ENCODE measurements at regions of chr5 and their contacts with region 1.

Region 1: DNA sequence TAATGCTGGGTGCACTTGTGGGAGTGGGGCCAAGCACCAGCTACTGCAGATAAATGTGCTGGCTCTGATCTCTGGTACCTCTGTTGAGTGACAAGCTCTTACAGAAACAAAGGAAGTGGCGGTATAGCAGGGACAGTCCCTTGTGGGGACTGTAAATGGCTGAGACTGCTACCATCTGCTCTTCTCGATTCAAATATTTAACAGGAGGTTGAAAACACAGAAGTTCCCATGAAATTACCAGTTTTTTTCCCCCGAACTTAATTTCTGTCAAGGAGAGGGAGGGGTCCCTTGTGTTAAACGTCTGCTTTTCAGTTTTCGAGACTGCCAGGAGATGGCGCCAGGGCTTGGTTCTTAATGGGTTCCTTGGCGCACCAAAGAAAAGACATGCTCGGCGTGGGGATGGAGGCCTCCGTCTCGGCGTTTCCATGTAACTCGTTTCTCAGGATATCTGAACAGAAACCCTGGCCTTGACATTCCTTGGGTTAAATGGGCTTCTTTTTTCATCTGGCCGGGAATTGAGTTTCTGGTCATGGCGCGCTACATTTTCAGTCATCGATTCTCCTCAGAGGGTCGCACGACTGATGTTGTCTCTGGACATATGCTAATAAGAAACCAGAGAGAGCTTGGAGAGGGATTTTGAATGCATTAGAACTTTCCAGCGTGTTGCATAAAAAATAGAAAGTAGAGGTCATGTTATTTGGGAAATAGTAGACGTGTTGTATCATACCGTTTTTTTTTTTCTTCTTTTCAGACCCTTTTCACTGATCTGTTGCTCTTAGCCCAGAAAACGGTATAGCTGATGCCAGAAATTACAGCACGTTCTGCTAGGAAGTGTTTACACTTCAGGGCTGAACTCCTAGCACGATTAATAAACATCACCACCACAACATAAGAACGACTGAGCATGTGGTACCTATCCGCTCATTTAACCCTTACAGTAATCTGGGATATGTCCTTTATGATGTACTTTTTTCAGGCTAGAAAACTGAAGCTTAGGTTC is 64.0 kb downstream of the CARTPT start:
- DNase-seq: peak; percentile 36
- H3K4me3 ChIP-seq: peak overlapping the region; percentile 39
- H3K27ac ChIP-seq: peak overlapping the region; percentile 41
- H3K27me3 ChIP-seq: peaks cover 3% of the 10 kb centered on the region
- CTCF ChIP-seq: peak; percentile 94

Region 2: DNA sequence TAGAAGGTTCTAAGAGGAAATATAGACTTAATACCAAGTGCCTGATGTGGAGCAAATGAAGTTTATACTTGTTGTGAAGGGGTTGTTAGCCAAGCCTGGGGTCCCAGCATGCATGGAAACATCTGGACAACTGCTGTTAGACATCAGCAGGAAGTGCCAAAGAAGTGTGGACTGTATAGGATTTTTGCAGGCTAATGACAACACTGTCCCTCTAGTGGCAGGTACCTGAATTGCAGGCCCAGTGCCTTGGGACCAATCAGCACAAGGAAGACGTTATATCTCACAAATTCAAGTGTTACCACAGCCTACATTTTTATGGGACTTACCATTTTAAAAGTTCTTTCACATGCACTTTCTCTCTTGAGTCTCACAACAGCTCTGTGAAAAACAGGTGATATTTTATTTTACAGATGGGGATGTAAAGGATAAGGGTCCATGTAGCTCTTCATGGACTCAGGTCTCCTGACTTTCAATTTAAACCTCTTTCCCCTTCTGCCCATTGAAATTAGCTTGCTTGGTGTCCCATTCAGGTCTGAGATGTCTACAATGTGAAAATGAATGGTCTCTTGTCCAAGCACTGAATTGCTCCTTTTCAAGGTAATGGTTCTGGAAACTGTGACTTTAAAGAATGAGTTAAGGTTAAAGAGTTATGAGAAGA is 235.2 kb after region 1 on chr5:
- CTCF ChIA-PET with region 1: interaction called, 14 read pairs
- POLR2A ChIA-PET with region 1: no interaction called
- DNase-seq: peak; percentile 23
- H3K4me3 ChIP-seq: no peak overlapping the region
- H3K27ac ChIP-seq: no peak overlapping the region
- H3K27me3 ChIP-seq: peaks cover 20% of the 10 kb centered on the region
- CTCF ChIP-seq: peak; percentile 94

Measured in AG04450 (cell line).